ENCODE measurements at regions of chr6 and their contacts with region 1.

Region 1: GRCh38 chr6:31158140-31158862 is at the start of gene TCF19:
- DNase-seq: peak; percentile 99
- ATAC-seq: peak; percentile 90
- H3K4me3 Mint-ChIP-seq: peak within 1 kb of the TSS; percentile 97
- H3K27ac Mint-ChIP-seq: peak within 1 kb of the TSS; percentile 89
- H3K4me1 Mint-ChIP-seq: peaks cover 39% of the 10 kb centered on the region
- H3K27me3 Mint-ChIP-seq: no peaks in the 10 kb centered on the region
- total RNA-seq, gene TCF19: 82.6 to 88.0 TPM

Region 2: GRCh38 chr6:29813809-29814208 is 1344.5 kb before region 1 on chr6:
- CTCF ChIA-PET with region 1: no interaction called
- POLR2A ChIA-PET with region 1: no interaction called
- intact Hi-C with region 1: no loop called
- DNase-seq: no peak
- ATAC-seq: no peak
- H3K4me3 Mint-ChIP-seq: no peak overlapping the region
- H3K27ac Mint-ChIP-seq: no peak overlapping the region
- H3K4me1 Mint-ChIP-seq: peaks cover 8% of the 10 kb centered on the region
- H3K27me3 Mint-ChIP-seq: peaks cover 11% of the 10 kb centered on the region

Region 3: DNA sequence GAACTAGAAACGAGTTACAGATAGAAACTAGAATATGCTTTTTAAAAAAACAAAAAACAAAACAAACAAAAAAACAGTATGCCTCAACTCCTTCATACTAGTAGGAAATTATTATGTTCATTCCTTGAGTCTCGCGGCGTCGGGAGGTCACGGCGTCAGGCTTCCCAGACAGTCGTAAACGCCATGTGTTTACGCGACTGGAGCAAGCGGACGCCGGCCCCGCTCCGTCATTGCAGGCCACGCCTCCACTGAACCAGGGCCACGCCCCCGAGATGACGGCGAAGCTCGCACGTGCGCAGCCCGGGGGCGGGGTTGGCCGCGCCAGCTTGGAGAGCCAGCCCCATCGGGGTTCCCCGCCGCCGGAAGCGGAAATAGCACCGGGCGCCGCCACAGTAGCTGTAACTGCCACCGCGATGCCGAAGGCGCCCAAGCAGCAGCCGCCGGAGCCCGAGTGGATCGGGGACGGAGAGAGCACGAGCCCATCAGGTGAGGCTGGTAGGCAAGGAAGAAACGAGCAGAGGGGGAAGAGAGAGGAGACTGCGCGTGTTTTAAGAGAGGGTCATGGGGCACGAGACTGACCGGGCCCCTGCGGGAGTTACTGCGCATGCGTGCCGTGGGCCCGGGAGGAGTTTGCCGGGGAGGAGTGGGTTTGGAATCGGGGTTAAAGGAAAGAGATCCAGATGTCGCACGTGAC is 587.1 kb before region 1 on chr6 and contains the start of gene ABCF1:
- CTCF ChIA-PET with region 1: no interaction called
- POLR2A ChIA-PET with region 1: no interaction called
- intact Hi-C with region 1: loop called in 1 of 2 experiments (anchors 1 kb)
- DNase-seq: peak; percentile 100
- ATAC-seq: peak; percentile 86
- H3K4me3 Mint-ChIP-seq: peak within 1 kb of the TSS; percentile 94
- H3K27ac Mint-ChIP-seq: peak within 1 kb of the TSS; percentile 100
- H3K4me1 Mint-ChIP-seq: peaks cover 62% of the 10 kb centered on the region
- H3K27me3 Mint-ChIP-seq: no peaks in the 10 kb centered on the region
- total RNA-seq, gene ABCF1: 100.0 to 105 TPM

Region 4: GRCh38 chr6:30686908-30687658 is 471.2 kb before region 1 on chr6:
- CTCF ChIA-PET with region 1: no interaction called
- POLR2A ChIA-PET with region 1: no interaction called
- intact Hi-C with region 1: loop called in 1 of 2 experiments (anchors 2 kb)
- DNase-seq: peak; percentile 90
- ATAC-seq: peak; percentile 20
- H3K4me3 Mint-ChIP-seq: peak overlapping the region; percentile 100
- H3K27ac Mint-ChIP-seq: peak overlapping the region; percentile 89
- H3K4me1 Mint-ChIP-seq: peaks cover 42% of the 10 kb centered on the region
- H3K27me3 Mint-ChIP-seq: no peaks in the 10 kb centered on the region

Region 5: DNA sequence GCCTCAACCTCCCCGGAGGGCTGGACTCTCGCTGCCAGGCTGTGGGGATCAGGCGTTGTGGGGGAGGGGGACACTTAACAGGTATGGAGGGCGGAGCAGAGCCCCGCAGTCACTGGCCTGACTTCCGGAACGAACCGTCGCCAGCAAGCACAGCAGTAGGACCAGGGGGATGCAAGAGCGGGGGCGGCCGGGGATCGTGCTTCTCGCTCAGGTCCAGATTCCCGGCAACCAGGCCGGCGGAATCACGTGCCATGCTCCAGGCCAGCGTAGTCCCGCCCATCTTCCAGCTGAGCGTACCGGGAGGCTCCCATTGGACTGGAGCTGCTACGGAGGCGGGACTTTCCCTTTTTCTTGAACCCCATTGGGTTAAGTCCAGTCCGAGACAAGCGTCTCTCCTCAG is 22.2 kb after region 1 on chr6:
- CTCF ChIA-PET with region 1: interaction called, 3 read pairs
- POLR2A ChIA-PET with region 1: no interaction called
- intact Hi-C with region 1: loop called in 1 of 2 experiments (anchors 1 kb)
- DNase-seq: peak; percentile 82
- ATAC-seq: peak; percentile 96
- H3K4me3 Mint-ChIP-seq: peak overlapping the region; percentile 81
- H3K27ac Mint-ChIP-seq: peak overlapping the region; percentile 74
- H3K4me1 Mint-ChIP-seq: peaks cover 22% of the 10 kb centered on the region
- H3K27me3 Mint-ChIP-seq: no peaks in the 10 kb centered on the region

Region 6: DNA sequence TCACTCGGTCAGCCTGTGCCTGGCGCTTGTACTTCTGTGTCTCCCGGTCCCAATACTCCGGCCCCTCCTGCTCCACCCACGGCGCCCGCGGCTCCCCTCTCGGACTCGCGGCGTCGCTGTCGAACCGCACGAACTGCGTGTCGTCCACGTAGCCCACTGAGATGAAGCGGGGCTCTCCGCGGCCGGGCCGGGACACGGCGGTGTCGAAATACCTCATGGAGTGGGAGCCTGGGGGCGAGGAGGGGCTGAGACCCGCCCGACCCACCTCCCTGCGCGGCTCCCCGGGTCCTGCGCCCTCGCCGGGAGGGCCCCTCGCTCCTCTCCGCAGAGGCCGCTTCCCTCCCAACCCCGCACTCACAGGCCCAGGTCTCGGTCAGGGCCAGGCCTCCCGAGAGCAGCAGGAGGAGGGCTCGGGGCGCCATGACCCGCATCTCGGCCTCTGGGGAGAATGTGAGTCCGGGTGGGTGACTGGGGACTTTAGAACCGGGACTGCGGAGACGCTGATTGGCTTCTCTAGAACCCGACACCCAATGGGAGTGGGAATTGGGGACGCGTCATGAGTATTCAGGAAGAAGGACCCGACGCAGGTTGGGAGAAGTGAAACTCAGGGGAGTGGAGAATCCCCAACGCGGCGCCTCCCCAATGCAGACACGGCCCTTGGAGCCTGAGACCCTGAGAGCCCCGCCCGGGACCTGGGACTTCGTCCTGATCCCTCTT is 113.5 kb after region 1 on chr6 and contains the start of gene HLA-C:
- CTCF ChIA-PET with region 1: no interaction called
- POLR2A ChIA-PET with region 1: no interaction called
- intact Hi-C with region 1: loop called in 1 of 2 experiments (anchors 1 kb)
- DNase-seq: peak; percentile 92
- ATAC-seq: peak; percentile 89
- H3K4me3 Mint-ChIP-seq: peak within 1 kb of the TSS; percentile 95
- H3K27ac Mint-ChIP-seq: peak within 1 kb of the TSS; percentile 99
- H3K4me1 Mint-ChIP-seq: peaks cover 55% of the 10 kb centered on the region
- H3K27me3 Mint-ChIP-seq: no peaks in the 10 kb centered on the region
- total RNA-seq, gene HLA-C: 660 to 678 TPM

Region 7: DNA sequence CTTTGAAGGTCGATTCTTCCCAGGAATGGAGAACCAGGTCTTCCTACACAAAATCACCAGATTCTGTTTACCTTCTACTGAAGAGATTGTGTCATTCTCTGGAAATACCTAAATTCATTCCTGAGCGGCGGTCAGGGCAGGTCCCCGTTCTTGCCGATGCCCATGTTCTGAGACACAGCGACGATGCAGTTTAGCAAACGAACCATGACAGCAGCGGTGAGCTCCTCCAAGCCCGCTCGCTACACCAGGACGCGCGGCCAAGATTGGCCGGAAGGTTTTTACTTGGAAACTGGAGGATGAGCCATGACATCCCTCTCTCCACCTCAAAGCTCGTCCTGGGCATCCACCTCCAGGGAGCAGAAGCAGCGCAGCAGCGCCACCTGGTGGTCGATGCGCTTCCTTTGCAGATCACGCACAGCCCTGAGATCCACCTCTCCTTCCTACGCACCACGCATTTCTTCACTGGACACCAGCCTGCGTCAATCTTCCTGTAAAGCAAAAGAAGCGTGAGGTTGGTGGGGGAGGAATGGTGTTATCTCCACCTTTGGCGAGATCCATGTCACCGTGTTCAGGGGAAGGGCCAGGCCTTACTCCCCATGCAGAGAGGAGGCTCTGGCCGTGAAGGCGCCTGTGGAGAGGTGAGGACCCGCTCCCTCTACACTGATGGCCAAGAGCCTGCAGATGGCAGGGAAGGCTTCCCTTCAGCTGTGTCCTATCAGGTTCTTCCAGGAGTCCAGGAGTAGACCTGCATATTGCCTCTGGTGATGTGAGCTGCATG is 208.6 kb after region 1 on chr6:
- CTCF ChIA-PET with region 1: interaction called, 8 read pairs
- POLR2A ChIA-PET with region 1: interaction called, 7 read pairs
- intact Hi-C with region 1: loop called in 1 of 2 experiments (anchors 2 kb)
- DNase-seq: peak; percentile 88
- ATAC-seq: peak; percentile 96
- H3K4me3 Mint-ChIP-seq: peak overlapping the region; percentile 73
- H3K27ac Mint-ChIP-seq: peak overlapping the region; percentile 49
- H3K4me1 Mint-ChIP-seq: peaks cover 21% of the 10 kb centered on the region
- H3K27me3 Mint-ChIP-seq: peaks cover 22% of the 10 kb centered on the region

Region 8: GRCh38 chr6:31462964-31463870 is 304.9 kb after region 1 on chr6:
- CTCF ChIA-PET with region 1: no interaction called
- POLR2A ChIA-PET with region 1: no interaction called
- intact Hi-C with region 1: loop called in 1 of 2 experiments (anchors 1 kb)
- DNase-seq: peak; percentile 91
- ATAC-seq: peak; percentile 95
- H3K4me3 Mint-ChIP-seq: peak overlapping the region; percentile 100
- H3K27ac Mint-ChIP-seq: peak overlapping the region; percentile 97
- H3K4me1 Mint-ChIP-seq: peaks cover 53% of the 10 kb centered on the region
- H3K27me3 Mint-ChIP-seq: peaks cover 2% of the 10 kb centered on the region